CD8-positive, alpha-beta memory T cell (primary cell): ENCODE measurements at regions of chr19 and their contacts with region 1.

Region 1: GRCh38 chr19:7680606-7681339 is at the start of gene TRAPPC5:
- DNase-seq: peak; percentile 81 to 88 (median 82)
- H3K4me3 ChIP-seq: peak within 1 kb of the TSS; percentile 83
- H3K4me3 Mint-ChIP-seq: peak within 1 kb of the TSS; percentile 86 to 96 (median 86)
- H3K27ac ChIP-seq: peak within 1 kb of the TSS; percentile 82
- H3K27ac Mint-ChIP-seq: peak within 1 kb of the TSS; percentile 81 to 97 (median 92)
- H3K4me1 ChIP-seq: peaks cover 35% of the 10 kb centered on the region
- H3K4me1 Mint-ChIP-seq: peaks cover 30 to 57% (median 37%) of the 10 kb centered on the region in 3 donors
- H3K27me3 ChIP-seq: no peaks in the 10 kb centered on the region
- H3K27me3 Mint-ChIP-seq: peaks cover 12 to 30% of the 10 kb centered on the region in 2 donors
- total RNA-seq, gene TRAPPC5: 63.5 to 70.1 TPM

Region 2: DNA sequence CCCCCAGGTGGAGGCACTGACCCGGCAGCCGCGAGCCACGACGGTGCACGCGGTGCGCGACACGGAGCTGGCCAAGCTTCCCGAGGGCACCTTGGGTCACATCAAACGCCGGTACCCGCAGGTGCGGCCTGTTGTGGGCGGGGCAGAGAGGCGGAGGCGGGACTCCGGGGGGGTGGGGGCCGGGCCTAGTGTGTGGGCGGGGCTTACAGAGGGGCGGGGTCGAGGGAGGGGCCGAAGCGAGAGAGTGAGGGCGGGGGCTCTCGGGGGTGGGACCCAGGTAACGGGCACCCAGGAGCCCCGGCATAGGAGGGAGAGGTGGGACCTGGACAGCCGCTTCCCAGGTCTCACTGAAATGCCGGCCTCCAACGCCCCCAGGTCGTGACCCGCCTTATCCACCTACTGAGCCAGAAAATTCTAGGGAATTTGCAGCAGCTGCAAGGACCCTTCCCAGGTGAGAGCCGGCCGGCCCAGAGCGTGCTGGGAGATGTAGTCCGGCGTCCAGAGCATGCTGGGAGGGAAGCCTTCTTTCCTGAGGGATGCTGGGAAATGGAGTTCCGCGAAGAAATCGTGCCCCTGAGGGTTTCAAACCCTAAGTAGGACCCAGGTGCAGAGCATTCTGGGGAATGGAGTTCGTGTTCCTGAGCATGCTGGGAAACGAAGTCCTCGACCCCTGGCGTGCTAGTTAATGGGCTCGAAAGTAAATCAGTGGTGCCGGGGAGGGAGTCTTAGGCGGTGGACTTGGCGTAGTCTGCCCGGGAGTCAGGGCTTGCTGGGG is 129.6 kb before region 1 on chr19:
- CTCF ChIA-PET with region 1: no interaction called
- POLR2A ChIA-PET with region 1: no interaction called
- DNase-seq: peak in 2 of 5 donors; percentile 20 to 40
- H3K4me3 ChIP-seq: no peak overlapping the region
- H3K4me3 Mint-ChIP-seq: no peak overlapping the region
- H3K27ac ChIP-seq: no peak overlapping the region
- H3K27ac Mint-ChIP-seq: peak overlapping the region in 1 of 8 donors; percentile 57
- H3K4me1 ChIP-seq: no peaks in the 10 kb centered on the region
- H3K4me1 Mint-ChIP-seq: peaks cover 0 to 8% (median 6%) of the 10 kb centered on the region in 3 donors
- H3K27me3 ChIP-seq: no peaks in the 10 kb centered on the region
- H3K27me3 Mint-ChIP-seq: no peaks in the 10 kb centered on the region

Region 3: GRCh38 chr19:7575434-7576040 is 105.2 kb before region 1 on chr19:
- CTCF ChIA-PET with region 1: no interaction called
- POLR2A ChIA-PET with region 1: no interaction called
- DNase-seq: no peak
- H3K4me3 ChIP-seq: no peak overlapping the region
- H3K4me3 Mint-ChIP-seq: no peak overlapping the region
- H3K27ac ChIP-seq: no peak overlapping the region
- H3K27ac Mint-ChIP-seq: no peak overlapping the region
- H3K4me1 ChIP-seq: no peaks in the 10 kb centered on the region
- H3K4me1 Mint-ChIP-seq: no peaks in the 10 kb centered on the region
- H3K27me3 ChIP-seq: no peaks in the 10 kb centered on the region
- H3K27me3 Mint-ChIP-seq: peaks cover 2 to 19% of the 10 kb centered on the region in 2 donors

Region 4: GRCh38 chr19:7629347-7630054 is 51.3 kb before region 1 on chr19 and contains the starts of genes PET100 and XAB2:
- CTCF ChIA-PET with region 1: interaction called, 11 read pairs
- POLR2A ChIA-PET with region 1: interaction called, 4 read pairs
- DNase-seq: peak; percentile 89 to 98 (median 94)
- H3K4me3 ChIP-seq: peak within 1 kb of the TSS; percentile 92
- H3K4me3 Mint-ChIP-seq: peak within 1 kb of the TSS; percentile 90 to 99 (median 97)
- H3K27ac ChIP-seq: peak within 1 kb of the TSS; percentile 98
- H3K27ac Mint-ChIP-seq: peak within 1 kb of the TSS; percentile 90 to 100 (median 100)
- H3K4me1 ChIP-seq: peaks cover 22% of the 10 kb centered on the region
- H3K4me1 Mint-ChIP-seq: peaks cover 32 to 51% (median 39%) of the 10 kb centered on the region in 3 donors
- H3K27me3 ChIP-seq: no peaks in the 10 kb centered on the region
- H3K27me3 Mint-ChIP-seq: no peaks in the 10 kb centered on the region
- total RNA-seq, gene PET100: 110 TPM
- total RNA-seq, gene XAB2: 46.0 to 47.6 TPM

Region 5: DNA sequence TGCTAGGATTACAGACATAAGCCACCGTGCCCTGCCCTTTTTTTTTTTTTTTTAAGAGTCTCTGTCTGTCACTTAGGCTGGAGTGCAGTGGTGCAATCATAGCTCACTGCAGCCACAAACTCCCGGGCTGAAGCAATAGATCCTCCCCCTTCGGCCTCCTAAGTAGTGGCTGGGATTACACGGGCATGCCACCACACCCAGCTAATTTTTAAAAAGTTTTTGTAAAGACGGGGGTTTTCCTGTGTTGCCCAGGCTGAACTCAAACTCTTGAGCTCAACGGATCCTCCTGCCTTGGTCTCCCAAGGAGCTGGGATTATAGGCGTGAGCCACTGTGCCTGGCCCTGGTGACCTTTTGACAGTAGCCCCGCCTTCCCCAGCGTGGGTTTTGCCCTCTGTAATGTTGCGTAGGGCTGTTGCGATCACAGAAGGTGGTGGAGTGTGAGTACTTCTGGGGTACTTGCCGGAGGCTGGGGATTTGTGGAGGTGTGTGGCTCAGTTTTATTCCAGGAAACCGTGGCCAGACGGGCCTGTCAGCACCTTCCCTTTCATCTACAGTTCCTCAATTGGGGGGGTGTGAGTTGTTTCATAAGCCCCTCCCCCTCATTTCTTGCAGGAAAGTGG is 23.5 kb before region 1 on chr19:
- CTCF ChIA-PET with region 1: interaction called, 33 read pairs
- POLR2A ChIA-PET with region 1: no interaction called
- DNase-seq: no peak
- H3K4me3 ChIP-seq: no peak overlapping the region
- H3K4me3 Mint-ChIP-seq: no peak overlapping the region
- H3K27ac ChIP-seq: no peak overlapping the region
- H3K27ac Mint-ChIP-seq: peak overlapping the region in 5 of 8 donors; percentile 21 to 74 (median 67)
- H3K4me1 ChIP-seq: peaks cover 16% of the 10 kb centered on the region
- H3K4me1 Mint-ChIP-seq: peaks cover 11 to 14% (median 14%) of the 10 kb centered on the region in 3 donors
- H3K27me3 ChIP-seq: no peaks in the 10 kb centered on the region
- H3K27me3 Mint-ChIP-seq: peaks cover 0 to 10% of the 10 kb centered on the region in 2 donors

Region 6: DNA sequence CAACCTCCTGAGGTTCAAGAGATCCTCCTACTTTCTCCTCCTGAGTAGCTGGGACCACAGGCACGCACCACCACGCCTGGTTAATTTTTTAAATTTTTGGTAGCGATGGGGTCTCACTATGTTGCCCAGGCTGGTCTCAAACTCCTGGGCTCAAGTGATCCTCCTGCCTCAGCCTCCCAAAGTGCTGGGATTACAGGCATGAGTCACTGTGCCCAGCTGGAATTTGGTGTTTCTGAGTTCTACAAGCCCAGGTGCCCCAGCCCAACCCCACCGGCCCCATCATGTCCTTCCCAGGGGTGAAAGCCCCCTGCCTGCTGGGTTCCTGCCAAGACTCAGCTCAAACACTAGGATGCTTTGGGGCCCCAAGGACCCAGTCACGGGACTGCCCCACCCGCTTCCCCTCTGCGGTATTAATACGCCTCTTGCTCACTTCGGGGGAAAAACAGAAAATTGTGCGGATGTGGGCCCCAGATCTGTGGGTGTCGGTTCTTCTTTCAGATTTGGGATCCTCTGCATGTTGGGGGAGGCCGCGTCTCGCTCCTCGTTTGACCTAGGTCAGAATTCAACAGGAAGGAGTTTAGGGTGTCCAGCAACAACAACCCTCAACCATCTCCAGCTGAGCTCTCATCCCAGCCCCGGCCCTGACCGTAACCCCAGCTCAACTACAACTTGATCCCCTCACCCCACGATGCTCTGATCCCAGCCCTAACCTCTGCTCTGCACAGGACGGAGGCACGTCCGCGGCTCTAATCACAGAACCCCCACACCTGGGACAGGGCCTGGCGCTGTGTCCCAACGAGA is 24.8 kb after region 1 on chr19:
- CTCF ChIA-PET with region 1: interaction called, 15 read pairs
- POLR2A ChIA-PET with region 1: interaction called, 4 read pairs
- DNase-seq: peak; percentile 46 to 82 (median 67)
- H3K4me3 ChIP-seq: peak overlapping the region; percentile 3
- H3K4me3 Mint-ChIP-seq: peak overlapping the region; percentile 36 to 89 (median 82)
- H3K27ac ChIP-seq: no peak overlapping the region
- H3K27ac Mint-ChIP-seq: peak overlapping the region; percentile 54 to 96 (median 94)
- H3K4me1 ChIP-seq: peaks cover 43% of the 10 kb centered on the region
- H3K4me1 Mint-ChIP-seq: peaks cover 24 to 45% (median 32%) of the 10 kb centered on the region in 3 donors
- H3K27me3 ChIP-seq: no peaks in the 10 kb centered on the region
- H3K27me3 Mint-ChIP-seq: no peaks in the 10 kb centered on the region

Region 7: GRCh38 chr19:7792253-7792652 is 111.5 kb after region 1 on chr19:
- CTCF ChIA-PET with region 1: interaction called, 11 read pairs
- POLR2A ChIA-PET with region 1: no interaction called
- DNase-seq: no peak
- H3K4me3 ChIP-seq: no peak overlapping the region
- H3K4me3 Mint-ChIP-seq: no peak overlapping the region
- H3K27ac ChIP-seq: no peak overlapping the region
- H3K27ac Mint-ChIP-seq: peak overlapping the region in 1 of 8 donors; percentile 2
- H3K4me1 ChIP-seq: peaks cover 8% of the 10 kb centered on the region
- H3K4me1 Mint-ChIP-seq: peaks cover 0 to 9% (median 3%) of the 10 kb centered on the region in 3 donors
- H3K27me3 ChIP-seq: peaks cover 4% of the 10 kb centered on the region
- H3K27me3 Mint-ChIP-seq: peaks cover 20 to 32% of the 10 kb centered on the region in 2 donors